ENCODE measurements at regions of chr4 and their contacts with region 1.

Region 1: DNA sequence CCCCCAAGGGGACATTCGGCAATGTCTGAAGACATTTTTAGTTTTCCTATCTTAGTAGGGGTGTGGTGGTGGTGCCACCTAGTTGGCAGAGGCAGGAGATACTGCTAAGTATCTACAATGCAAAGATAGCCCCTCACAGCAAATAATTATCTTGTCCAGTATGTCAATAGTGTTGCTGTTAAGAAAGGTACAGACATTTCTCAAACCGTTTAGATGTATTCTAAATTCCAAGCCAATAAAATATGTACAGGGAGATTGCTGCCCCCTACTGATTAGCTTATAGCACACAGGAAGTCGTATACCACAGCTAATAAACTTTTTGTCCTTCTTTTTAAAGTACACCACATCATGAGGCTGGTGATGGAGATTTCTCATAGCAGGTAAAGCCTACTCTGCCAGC is 260.5 kb downstream of the TMA16 start:
- DNase-seq: peak; percentile 23
- H3K4me3 ChIP-seq: no peak overlapping the region
- H3K27ac ChIP-seq: no peak overlapping the region
- H3K4me1 ChIP-seq: no peaks in the 10 kb centered on the region
- H3K27me3 ChIP-seq: peaks cover 2% of the 10 kb centered on the region
- CTCF ChIP-seq: peak; percentile 47 to 60

Region 2: DNA sequence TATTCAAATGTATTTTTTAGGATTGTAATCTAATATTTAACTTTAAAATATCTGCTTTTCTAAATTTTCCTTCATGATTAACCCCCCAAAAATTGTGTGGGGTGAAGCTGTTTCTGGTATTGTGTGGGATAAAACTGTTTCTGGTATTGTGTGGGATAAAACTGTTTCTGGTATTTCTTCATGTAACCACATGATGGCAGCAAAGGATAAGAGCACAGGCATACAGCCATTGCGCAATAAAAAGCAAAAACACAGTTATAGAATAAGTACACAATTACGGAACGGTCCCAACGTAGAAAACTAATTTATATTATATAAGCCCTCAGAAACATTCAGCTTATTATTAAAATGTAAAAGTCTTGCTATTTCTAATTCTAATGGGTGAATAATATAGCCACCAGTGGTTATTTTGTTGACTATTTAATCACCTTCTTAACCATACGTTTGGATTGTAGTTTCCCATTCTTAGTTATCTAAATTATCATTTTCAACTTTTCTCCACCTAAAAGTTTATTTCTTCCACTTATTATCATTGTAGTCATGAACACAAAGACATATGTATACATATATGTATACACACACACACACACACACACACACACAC is 1257.3 kb before region 1 on chr4:
- CTCF ChIA-PET with region 1: no interaction called
- dilution Hi-C with region 1: no loop called
- in situ Hi-C with region 1: no loop called
- intact Hi-C with region 1: loop called (anchors 5 kb)
- DNase-seq: peak; percentile 25
- H3K4me3 ChIP-seq: no peak overlapping the region
- H3K27ac ChIP-seq: no peak overlapping the region
- H3K4me1 ChIP-seq: no peaks in the 10 kb centered on the region
- H3K27me3 ChIP-seq: no peaks in the 10 kb centered on the region
- CTCF ChIP-seq: peak; percentile 46 to 82

Region 3: GRCh38 chr4:163378661-163379060 is 376.4 kb before region 1 on chr4:
- CTCF ChIA-PET with region 1: no interaction called
- dilution Hi-C with region 1: no loop called
- in situ Hi-C with region 1: no loop called
- intact Hi-C with region 1: no loop called
- DNase-seq: no peak
- H3K4me3 ChIP-seq: no peak overlapping the region
- H3K27ac ChIP-seq: no peak overlapping the region
- H3K4me1 ChIP-seq: no peaks in the 10 kb centered on the region
- H3K27me3 ChIP-seq: no peaks in the 10 kb centered on the region
- CTCF ChIP-seq: no peak

Region 4: DNA sequence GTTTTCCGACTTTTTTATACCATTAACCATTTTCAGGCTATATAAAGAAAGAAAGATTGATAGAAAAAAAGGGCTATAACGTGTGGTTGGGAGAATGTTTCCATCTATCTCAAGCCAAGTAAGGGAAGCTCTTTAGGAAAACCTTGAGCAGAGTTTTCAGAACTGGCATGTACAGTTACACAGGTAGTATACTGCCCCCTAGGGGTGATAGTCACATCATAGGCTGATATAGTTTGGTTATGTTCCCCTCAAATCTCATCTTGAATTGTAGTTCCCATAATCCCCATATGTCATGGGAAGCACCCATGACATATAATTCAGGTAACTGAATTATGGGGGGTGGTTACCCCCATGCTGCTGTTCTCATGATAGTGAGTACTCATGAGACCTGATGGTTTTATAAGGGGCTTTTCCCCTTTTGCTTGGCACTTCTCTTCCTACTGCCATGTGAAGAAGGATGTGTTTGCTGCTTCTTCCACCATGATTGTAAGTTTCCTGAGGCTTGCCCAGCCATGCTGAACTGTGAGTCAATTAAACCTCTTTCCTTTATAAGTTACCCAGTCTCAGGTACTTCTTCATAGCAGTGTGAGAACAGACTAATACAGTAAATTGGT is 73.7 kb before region 1 on chr4:
- CTCF ChIA-PET with region 1: interaction called, 3 read pairs
- dilution Hi-C with region 1: no loop called
- in situ Hi-C with region 1: no loop called
- intact Hi-C with region 1: loop called (anchors 1 kb)
- DNase-seq: no peak
- H3K4me3 ChIP-seq: no peak overlapping the region
- H3K27ac ChIP-seq: no peak overlapping the region
- H3K4me1 ChIP-seq: no peaks in the 10 kb centered on the region
- H3K27me3 ChIP-seq: no peaks in the 10 kb centered on the region
- CTCF ChIP-seq: peak; percentile 54 to 57

Measured in mammary epithelial cell (primary cell).